ENCODE measurements at regions of chr6 and their contacts with region 1.

Region 1: GRCh38 chr6:31827286-31828079 is at the start of gene HSPA1B:
- DNase-seq: peak; percentile 99
- H3K4me3 ChIP-seq: peak within 1 kb of the TSS; percentile 84
- H3K27ac ChIP-seq: peak within 1 kb of the TSS; percentile 98
- H3K4me1 ChIP-seq: peaks cover 54% of the 10 kb centered on the region
- H3K27me3 ChIP-seq: no peaks in the 10 kb centered on the region
- CTCF ChIP-seq: no peak
- total RNA-seq, gene HSPA1B: 334 and 340 TPM in 2 replicates

Region 2: DNA sequence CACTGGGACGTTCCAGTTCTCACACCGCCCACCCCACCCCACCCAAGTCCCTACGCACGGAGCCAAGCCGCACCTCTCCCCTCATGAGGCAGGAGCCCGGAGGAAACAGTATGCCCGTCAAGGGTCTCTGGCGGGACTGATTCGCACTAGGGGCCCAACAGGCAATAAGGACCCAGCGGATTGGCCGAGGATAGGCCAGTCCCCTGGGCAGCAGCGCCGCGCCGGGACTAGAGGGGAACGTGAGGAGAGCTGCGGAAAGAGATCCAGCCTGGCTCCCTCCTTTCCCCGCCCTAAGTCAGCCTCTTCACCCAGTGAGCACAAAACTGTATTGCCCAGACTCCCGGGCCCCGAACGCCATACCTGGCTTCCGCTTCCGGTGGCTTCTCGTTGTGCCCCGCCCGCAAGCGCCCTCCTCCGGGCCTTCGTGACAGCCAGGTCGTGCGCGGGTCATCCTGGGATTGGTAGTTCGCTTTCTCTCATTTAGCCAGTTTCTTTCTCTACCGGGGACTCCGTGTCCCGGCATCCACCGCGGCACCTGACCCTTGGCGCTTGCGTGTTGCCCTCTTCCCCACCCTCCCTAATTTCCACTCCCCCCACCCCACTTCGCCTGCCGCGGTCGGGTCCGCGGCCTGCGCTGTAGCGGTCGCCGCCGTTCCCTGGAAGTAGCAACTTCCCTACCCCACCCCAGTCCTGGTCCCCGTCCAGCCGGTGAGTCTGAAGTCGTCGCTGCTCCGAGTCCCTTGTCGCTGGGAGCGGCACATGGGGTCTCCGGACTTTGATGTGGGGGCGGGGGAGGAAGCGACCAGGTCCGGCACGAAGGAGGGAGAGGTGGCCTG is 161.8 kb before region 1 on chr6 and contains the start of gene CSNK2B:
- CTCF ChIA-PET with region 1: interaction called, 11 read pairs
- POLR2A ChIA-PET with region 1: interaction called, 4 read pairs
- intact Hi-C with region 1: no loop called
- DNase-seq: peak; percentile 95 to 96
- H3K4me3 ChIP-seq: peak within 1 kb of the TSS; percentile 90
- H3K27ac ChIP-seq: peak within 1 kb of the TSS; percentile 80
- H3K4me1 ChIP-seq: peaks cover 24% of the 10 kb centered on the region
- H3K27me3 ChIP-seq: no peaks in the 10 kb centered on the region
- CTCF ChIP-seq: no peak
- total RNA-seq, gene CSNK2B: 152 and 173 TPM in 2 replicates

Region 3: GRCh38 chr6:31795616-31796298 is 31.7 kb before region 1 on chr6 and contains the start of gene VARS1:
- CTCF ChIA-PET with region 1: interaction called, 7 read pairs
- POLR2A ChIA-PET with region 1: interaction called, 12 read pairs
- intact Hi-C with region 1: loop called (anchors 1 kb)
- DNase-seq: peak; percentile 89 to 96
- H3K4me3 ChIP-seq: peak within 1 kb of the TSS; percentile 86
- H3K27ac ChIP-seq: peak within 1 kb of the TSS; percentile 78
- H3K4me1 ChIP-seq: peaks cover 28% of the 10 kb centered on the region
- H3K27me3 ChIP-seq: no peaks in the 10 kb centered on the region
- CTCF ChIP-seq: peak; percentile 73
- total RNA-seq, gene VARS1: 99.6 and 124 TPM in 2 replicates

Region 4: DNA sequence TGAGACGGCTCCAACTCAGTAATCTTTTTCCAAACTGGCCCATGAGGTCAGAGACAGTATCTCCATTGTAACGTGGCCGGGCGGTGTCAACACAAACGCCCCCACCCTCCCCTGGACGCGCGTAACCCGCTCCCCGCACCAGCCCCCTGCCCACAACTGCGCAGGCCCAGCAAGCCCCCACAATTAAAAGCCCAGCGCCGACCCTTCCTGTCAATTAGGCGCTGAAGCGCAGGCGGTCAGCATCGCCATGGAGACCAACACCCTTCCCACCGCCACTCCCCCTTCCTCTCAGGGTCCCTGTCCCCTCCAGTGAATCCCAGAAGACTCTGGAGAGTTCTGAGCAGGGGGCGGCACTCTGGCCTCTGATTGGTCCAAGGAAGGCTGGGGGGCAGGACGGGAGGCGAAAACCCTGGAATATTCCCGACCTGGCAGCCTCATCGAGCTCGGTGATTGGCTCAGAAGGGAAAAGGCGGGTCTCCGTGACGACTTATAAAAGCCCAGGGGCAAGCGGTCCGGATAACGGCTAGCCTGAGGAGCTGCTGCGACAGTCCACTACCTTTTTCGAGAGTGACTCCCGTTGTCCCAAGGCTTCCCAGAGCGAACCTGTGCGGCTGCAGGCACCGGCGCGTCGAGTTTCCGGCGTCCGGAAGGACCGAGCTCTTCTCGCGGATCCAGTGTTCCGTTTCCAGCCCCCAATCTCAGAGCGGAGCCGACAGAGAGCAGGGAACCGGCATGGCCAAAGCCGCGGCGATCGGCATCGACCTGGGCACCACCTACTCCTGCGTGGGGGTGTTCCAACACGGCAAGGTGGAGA is 12.3 kb before region 1 on chr6 and contains the starts of genes HSPA1A and HSPA1L:
- CTCF ChIA-PET with region 1: no interaction called
- POLR2A ChIA-PET with region 1: interaction called, 40 read pairs
- intact Hi-C with region 1: loop called (anchors 2 kb)
- DNase-seq: peak; percentile 94 to 97
- H3K4me3 ChIP-seq: peak within 1 kb of the TSS; percentile 84
- H3K27ac ChIP-seq: peak within 1 kb of the TSS; percentile 92
- H3K4me1 ChIP-seq: peaks cover 22% of the 10 kb centered on the region
- H3K27me3 ChIP-seq: no peaks in the 10 kb centered on the region
- CTCF ChIP-seq: no peak
- total RNA-seq, gene HSPA1A: 378 and 385 TPM in 2 replicates
- total RNA-seq, gene HSPA1L: 2.3 and 2.6 TPM in 2 replicates

Region 5: GRCh38 chr6:32952817-32953739 is 1125.6 kb after region 1 on chr6 and contains the start of gene HLA-DMA:
- CTCF ChIA-PET with region 1: interaction called, 11 read pairs
- POLR2A ChIA-PET with region 1: no interaction called
- intact Hi-C with region 1: no loop called
- DNase-seq: peak; percentile 88 to 94
- H3K4me3 ChIP-seq: no peak within 1 kb of the TSS
- H3K27ac ChIP-seq: no peak within 1 kb of the TSS
- H3K4me1 ChIP-seq: peaks cover 4% of the 10 kb centered on the region
- H3K27me3 ChIP-seq: no peaks in the 10 kb centered on the region
- CTCF ChIP-seq: peak; percentile 81
- total RNA-seq, gene HLA-DMA: 18.3 and 22.1 TPM in 2 replicates